WTC11 (cell line): ENCODE measurements at regions of chr2 and their contacts with region 1.

Region 1: GRCh38 chr2:218516614-218517013 is 51.5 kb downstream of the USP37 start:
- DNase-seq: no peak
- ATAC-seq: peak; percentile 60; the same call in 1 of the 2 replicates
- H3K4me3 Mint-ChIP-seq: no peak overlapping the region
- H3K27ac Mint-ChIP-seq: no peak overlapping the region
- H3K4me1 Mint-ChIP-seq: no peaks in the 10 kb centered on the region
- H3K27me3 Mint-ChIP-seq: no peaks in the 10 kb centered on the region
- CTCF ChIP-seq: peak; percentile 41

Region 2: DNA sequence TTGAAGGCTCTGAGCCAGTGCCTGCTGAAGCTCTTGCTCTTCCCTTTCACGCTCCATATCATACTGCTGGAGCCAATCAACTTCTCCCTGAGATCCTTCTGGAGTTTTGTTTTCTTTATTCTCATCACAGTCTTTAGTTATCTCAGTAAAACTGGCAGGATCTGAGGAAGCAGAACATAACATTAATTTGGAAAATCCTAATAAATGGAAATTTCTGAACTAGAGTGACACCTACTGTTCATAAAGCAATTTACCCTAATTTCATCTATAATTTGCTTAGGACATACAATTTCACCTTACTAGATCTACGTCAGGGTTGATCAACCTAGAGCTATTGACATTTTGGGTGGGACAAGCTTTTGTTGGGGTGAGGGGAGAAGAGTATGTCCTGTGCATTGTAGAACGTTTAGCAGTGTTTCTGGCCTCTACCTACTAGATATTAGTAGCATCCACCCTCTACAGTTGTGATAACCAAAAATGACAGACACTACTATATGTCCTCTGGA is 50.5 kb before region 1 on chr2:
- CTCF ChIA-PET with region 1: no interaction called
- POLR2A ChIA-PET with region 1: no interaction called
- DNase-seq: no peak
- ATAC-seq: no peak
- H3K4me3 Mint-ChIP-seq: no peak overlapping the region
- H3K27ac Mint-ChIP-seq: no peak overlapping the region
- H3K4me1 Mint-ChIP-seq: no peaks in the 10 kb centered on the region
- H3K27me3 Mint-ChIP-seq: no peaks in the 10 kb centered on the region
- CTCF ChIP-seq: no peak

Region 3: DNA sequence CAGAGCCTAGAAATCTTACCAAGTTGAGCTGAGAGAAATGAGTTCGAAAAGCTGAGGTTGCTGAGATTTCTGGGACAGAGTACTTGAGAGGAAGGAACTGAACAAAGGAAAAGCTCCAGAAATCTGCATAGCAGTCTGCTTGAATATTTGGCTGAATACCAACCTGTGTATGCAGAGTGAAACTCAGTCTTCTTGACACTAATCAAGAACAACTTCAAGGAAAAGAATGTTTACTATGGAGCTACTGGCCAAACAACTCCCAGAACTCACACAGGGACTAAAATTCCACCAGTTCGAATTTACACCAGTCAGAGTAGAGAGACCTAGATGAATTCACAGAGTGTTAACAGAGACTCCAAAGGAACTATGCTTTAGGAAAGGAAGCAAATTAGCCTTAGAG is 14.9 kb before region 1 on chr2:
- CTCF ChIA-PET with region 1: interaction called, 19 read pairs
- POLR2A ChIA-PET with region 1: no interaction called
- DNase-seq: no peak
- ATAC-seq: peak; percentile 90
- H3K4me3 Mint-ChIP-seq: peak overlapping the region; percentile 52
- H3K27ac Mint-ChIP-seq: peak overlapping the region; percentile 100
- H3K4me1 Mint-ChIP-seq: peaks cover 31% of the 10 kb centered on the region
- H3K27me3 Mint-ChIP-seq: no peaks in the 10 kb centered on the region
- CTCF ChIP-seq: no peak

Region 4: GRCh38 chr2:218568190-218569037 is 51.8 kb after region 1 on chr2 and contains the starts of genes CNOT9 and USP37:
- CTCF ChIA-PET with region 1: no interaction called
- POLR2A ChIA-PET with region 1: no interaction called
- DNase-seq: peak; percentile 100
- ATAC-seq: peak; percentile 91
- H3K4me3 Mint-ChIP-seq: peak within 1 kb of the TSS; percentile 86
- H3K27ac Mint-ChIP-seq: peak within 1 kb of the TSS; percentile 97
- H3K4me1 Mint-ChIP-seq: peaks cover 33% of the 10 kb centered on the region
- H3K27me3 Mint-ChIP-seq: no peaks in the 10 kb centered on the region
- CTCF ChIP-seq: no peak
- total RNA-seq, gene CNOT9: 61.9 to 67.0 TPM (median 62.6 TPM) in 3 replicates
- total RNA-seq, gene USP37: 18.6 to 21.6 TPM (median 20.2 TPM) in 3 replicates